Body of pancreas (tissue), 4 donors: ENCODE measurements at regions of chr15 and their contacts with region 1.

Region 1: GRCh38 chr15:75367913-75368688 is at the start of gene MAN2C1:
- DNase-seq: peak; percentile 97 to 98 (median 98)
- ATAC-seq: peak; percentile 94
- H3K4me3 ChIP-seq: peak within 1 kb of the TSS; percentile 82 to 86
- H3K27ac ChIP-seq: peak within 1 kb of the TSS; percentile 97 to 100 (median 99)
- H3K4me1 ChIP-seq: peaks cover 25% of the 10 kb centered on the region
- H3K27me3 ChIP-seq: no peaks in the 10 kb centered on the region
- CTCF ChIP-seq: peak; percentile 62 to 93 (median 86)
- POLR2A ChIP-seq: peak; percentile 92 to 98 (median 98)
- total RNA-seq, gene MAN2C1: 186 to 339 TPM

Region 2: DNA sequence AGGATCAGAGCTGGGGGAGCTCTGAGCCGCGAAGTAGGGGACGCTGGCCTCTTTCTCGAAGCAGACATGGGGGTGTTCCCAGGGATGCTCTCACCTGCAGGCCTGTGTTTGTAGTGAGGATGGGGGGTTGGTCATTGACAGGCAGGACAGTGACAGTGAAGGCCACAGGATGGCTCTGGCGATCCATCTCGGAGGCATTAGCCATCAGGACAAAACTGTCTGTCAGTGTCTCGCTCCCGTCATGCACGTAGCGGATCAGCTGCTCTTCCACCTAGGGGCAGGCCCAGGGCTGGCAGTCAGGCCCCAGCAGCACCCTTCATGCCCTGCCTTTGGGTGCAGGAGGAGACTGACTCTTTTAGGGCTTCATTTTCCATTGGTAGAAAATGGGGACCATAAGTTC is 316.5 kb after region 1 on chr15:
- intact Hi-C with region 1: loop called (anchors 10 kb)
- DNase-seq: no peak
- ATAC-seq: no peak
- H3K4me3 ChIP-seq: no peak overlapping the region
- H3K27ac ChIP-seq: no peak overlapping the region
- H3K4me1 ChIP-seq: peaks cover 14% of the 10 kb centered on the region
- H3K27me3 ChIP-seq: no peaks in the 10 kb centered on the region
- CTCF ChIP-seq: no peak
- POLR2A ChIP-seq: no peak